Transverse colon (tissue), 4 donors: ENCODE measurements at regions of chr4 and their contacts with region 1.

Region 1: GRCh38 chr4:18105030-18106011 is 83.8 kb upstream of the LCORL start:
- DNase-seq: no peak
- H3K4me3 ChIP-seq: no peak overlapping the region
- H3K27ac ChIP-seq: peak overlapping the region; percentile 9 to 77 (median 70)
- H3K4me1 ChIP-seq: peaks cover 3 to 42% (median 19%) of the 10 kb centered on the region in 4 donors
- H3K27me3 ChIP-seq: no peaks in the 10 kb centered on the region
- CTCF ChIP-seq: no peak
- EP300 ChIP-seq: no peak
- POLR2A ChIP-seq: no peak

Region 2: DNA sequence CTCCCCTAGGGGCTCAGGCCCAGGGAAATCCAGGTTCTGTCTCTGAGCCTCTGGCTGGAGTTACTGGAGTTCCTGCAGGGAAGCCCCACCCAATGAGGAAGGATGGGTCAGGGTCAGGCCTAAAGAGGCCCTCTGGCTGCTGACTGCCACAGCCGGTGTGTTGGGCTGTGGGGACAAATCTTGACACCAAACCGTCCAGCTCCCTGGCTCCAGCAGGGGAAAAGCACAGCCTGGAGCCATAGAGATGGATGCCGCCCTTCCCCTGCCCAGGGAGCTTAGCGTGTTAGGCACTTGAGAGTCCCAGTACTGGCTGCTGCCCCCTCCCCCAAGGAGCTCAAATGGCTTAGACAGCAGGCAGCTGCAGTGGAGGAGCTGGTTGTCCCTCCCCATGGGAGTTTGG is 237.5 kb after region 1 on chr4:
- in situ Hi-C with region 1: no loop called
- intact Hi-C with region 1: no loop called
- DNase-seq: no peak
- H3K4me3 ChIP-seq: no peak overlapping the region
- H3K27ac ChIP-seq: no peak overlapping the region
- H3K4me1 ChIP-seq: no peaks in the 10 kb centered on the region
- H3K27me3 ChIP-seq: no peaks in the 10 kb centered on the region
- CTCF ChIP-seq: no peak
- EP300 ChIP-seq: no peak
- POLR2A ChIP-seq: no peak

Region 3: GRCh38 chr4:19888587-19888986 is 1783.3 kb after region 1 on chr4:
- in situ Hi-C with region 1: no loop called
- intact Hi-C with region 1: loop called (anchors 5 kb)
- DNase-seq: no peak
- H3K4me3 ChIP-seq: no peak overlapping the region
- H3K27ac ChIP-seq: no peak overlapping the region
- H3K4me1 ChIP-seq: no peaks in the 10 kb centered on the region
- H3K27me3 ChIP-seq: no peaks in the 10 kb centered on the region
- CTCF ChIP-seq: no peak
- EP300 ChIP-seq: no peak
- POLR2A ChIP-seq: no peak